GM18951 (cell line): ENCODE measurements at regions of chr11 and their contacts with region 1.

Region 1: GRCh38 chr11:108135845-108136544 is 14.6 kb downstream of the ACAT1 start:
- POLR2A ChIP-seq: no peak

Region 2: DNA sequence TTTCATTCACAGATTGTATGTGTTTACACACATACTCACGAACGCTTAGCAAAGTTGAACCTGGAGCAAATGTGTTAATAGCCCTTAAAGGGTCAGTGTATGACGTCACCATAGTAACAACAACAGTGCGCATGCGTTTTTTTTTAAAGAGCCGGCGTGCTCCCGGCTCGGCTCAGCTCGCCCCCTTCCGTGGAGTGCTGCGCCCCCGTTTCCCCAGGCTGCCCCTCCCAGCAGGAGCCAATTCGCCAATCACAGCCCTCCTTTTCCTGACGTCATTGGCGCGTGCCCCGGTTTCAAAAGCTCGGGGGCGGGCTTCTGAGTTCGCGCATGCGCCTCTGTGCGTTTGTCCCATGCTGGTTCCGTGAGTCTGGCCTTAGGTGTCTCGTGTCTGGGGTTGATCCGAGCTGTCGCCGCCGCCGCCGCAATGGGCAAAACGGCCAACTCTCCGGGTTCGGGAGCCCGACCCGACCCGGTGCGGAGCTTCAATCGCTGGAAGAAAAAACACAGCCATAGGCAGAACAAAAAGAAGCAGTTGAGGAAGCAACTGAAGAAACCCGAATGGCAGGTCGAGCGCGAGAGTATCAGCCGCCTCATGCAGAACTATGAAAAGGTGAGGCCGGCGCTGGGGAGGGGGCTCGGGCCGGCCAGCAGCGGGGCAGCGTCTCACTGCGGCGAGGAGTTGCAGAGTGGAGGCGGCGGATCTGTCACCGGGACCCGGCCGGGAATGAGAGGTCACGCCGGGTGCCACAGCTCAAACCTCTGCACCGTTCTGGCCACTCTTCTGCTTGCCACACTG is 528.9 kb after region 1 on chr11 and contains the start of gene DDX10:
- in situ Hi-C with region 1: loop called (anchors 25 kb)
- POLR2A ChIP-seq: peak; percentile 68